Activated naive CD4-positive, alpha-beta T cell treated with anti-CD3 and anti-CD28 coated beads for 36 hours (primary cell): ENCODE measurements at regions of chr4 and their contacts with region 1.

Region 1: GRCh38 chr4:87848622-87849351 is 16.0 kb downstream of the MEPE start:
- DNase-seq: peak; percentile 65
- H3K4me3 Mint-ChIP-seq: peak overlapping the region; percentile 28
- H3K27ac Mint-ChIP-seq: no peak overlapping the region
- H3K4me1 Mint-ChIP-seq: peaks cover 5% of the 10 kb centered on the region
- H3K27me3 Mint-ChIP-seq: peaks cover 22% of the 10 kb centered on the region

Region 2: GRCh38 chr4:87150498-87151261 is 698.1 kb before region 1 on chr4:
- CTCF ChIA-PET with region 1: interaction called, 3 read pairs
- intact Hi-C with region 1: loop called (anchors 2 kb)
- DNase-seq: peak; percentile 67
- H3K4me3 Mint-ChIP-seq: no peak overlapping the region
- H3K27ac Mint-ChIP-seq: no peak overlapping the region
- H3K4me1 Mint-ChIP-seq: no peaks in the 10 kb centered on the region
- H3K27me3 Mint-ChIP-seq: no peaks in the 10 kb centered on the region

Region 3: DNA sequence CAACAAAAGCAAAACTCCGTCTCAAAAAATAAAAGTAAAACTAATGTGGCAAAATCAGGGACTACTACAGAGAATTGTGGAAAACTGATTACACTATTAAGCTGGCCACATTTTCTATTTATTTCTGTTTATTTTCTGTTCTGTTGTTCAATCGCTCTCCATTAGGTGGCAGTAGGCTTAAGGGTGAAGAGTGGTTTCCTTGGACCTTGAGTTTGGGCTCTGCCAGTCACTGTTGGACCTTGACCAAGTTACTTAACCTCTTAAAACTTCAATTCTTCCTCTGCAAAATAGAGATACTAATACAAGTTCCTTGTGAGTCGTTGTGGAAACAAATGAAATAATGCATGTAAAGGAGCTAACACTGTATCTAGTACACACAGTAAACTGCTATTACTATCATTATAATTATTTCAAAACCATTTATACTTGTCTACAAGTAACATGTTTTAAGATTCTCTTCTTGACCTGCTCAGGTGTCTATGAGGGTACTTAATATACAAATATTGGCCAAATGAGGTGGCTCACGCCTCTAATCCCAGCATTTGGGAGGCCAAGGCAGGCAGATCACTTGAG is 473.0 kb before region 1 on chr4:
- CTCF ChIA-PET with region 1: interaction called, 5 read pairs
- intact Hi-C with region 1: loop called (anchors 10 kb)
- DNase-seq: no peak
- H3K4me3 Mint-ChIP-seq: no peak overlapping the region
- H3K27ac Mint-ChIP-seq: no peak overlapping the region
- H3K4me1 Mint-ChIP-seq: no peaks in the 10 kb centered on the region
- H3K27me3 Mint-ChIP-seq: no peaks in the 10 kb centered on the region

Region 4: DNA sequence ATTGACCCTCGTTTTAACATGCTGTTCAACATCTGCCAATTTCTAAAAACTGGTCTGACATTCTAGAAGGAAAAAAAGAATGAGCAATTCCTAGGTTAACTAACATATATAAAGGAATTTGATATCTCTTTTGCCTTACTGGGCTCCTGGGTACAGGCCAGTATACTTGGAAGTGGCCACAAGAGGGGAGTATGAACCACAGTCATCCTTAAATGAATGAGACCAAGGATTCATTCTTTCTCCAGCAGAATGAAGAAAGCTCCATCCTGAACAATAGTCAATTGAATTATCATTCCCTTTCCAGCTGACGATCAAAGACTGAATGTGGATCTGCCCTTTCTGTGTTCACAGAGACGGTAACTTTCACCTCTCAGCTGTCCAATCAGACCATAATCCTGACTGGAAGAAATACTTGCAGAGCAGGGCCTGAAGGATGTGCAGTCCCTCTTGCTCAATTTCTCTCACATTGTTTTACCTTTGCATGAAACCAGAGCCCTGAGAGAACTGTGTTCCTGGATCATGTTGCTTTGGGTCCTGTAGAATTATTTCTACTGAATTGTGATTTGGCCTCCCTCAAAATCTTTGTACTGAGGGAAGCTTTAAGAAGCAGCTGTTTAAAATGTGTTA is 304.8 kb before region 1 on chr4:
- CTCF ChIA-PET with region 1: no interaction called
- intact Hi-C with region 1: loop called (anchors 2 kb)
- DNase-seq: peak; percentile 5
- H3K4me3 Mint-ChIP-seq: no peak overlapping the region
- H3K27ac Mint-ChIP-seq: no peak overlapping the region
- H3K4me1 Mint-ChIP-seq: no peaks in the 10 kb centered on the region
- H3K27me3 Mint-ChIP-seq: peaks cover 7% of the 10 kb centered on the region

Region 5: DNA sequence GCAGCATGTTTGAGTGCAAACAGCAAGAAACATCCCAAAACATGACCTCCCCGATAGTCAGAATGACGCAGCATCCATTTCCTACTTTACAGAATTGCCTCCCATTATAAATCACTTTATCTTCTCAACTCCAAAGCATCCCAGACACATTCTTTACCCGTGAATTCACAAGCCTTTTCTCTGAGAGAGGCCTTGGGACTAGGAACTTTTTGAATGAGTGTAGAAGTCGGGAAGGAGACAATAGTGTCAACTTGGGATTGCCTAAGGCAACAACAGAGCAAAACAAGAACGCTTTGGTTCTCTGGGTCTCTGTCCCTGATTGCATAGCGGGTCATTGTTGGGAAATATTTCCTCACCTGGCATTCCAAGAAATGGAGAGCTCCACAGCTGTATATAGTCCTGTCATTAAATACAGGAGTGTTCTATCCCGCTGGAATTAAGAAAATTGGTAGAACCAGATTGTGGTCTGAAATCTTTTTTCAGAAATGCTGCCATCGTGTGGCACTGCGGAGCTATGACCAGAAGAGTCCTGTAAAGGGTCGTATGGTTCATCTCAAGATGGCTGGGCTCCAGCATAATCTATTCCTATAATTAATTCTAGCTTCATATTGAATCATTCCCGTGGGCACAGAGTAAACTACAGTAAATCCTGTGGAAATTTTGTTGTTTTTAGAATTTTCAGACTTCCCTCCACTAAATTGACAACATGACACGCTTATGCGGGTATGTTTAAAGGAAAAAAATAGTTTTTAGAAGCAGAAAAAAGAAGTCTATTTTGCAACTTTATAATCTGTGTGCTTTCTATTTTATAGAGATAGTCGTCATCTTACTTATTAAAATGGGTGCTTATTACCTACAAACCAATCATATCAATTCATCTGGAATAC is 124.7 kb after region 1 on chr4:
- CTCF ChIA-PET with region 1: interaction called, 25 read pairs
- intact Hi-C with region 1: loop called (anchors 1 kb)
- DNase-seq: peak; percentile 58
- H3K4me3 Mint-ChIP-seq: no peak overlapping the region
- H3K27ac Mint-ChIP-seq: no peak overlapping the region
- H3K4me1 Mint-ChIP-seq: peaks cover 5% of the 10 kb centered on the region
- H3K27me3 Mint-ChIP-seq: peaks cover 33% of the 10 kb centered on the region

Region 6: DNA sequence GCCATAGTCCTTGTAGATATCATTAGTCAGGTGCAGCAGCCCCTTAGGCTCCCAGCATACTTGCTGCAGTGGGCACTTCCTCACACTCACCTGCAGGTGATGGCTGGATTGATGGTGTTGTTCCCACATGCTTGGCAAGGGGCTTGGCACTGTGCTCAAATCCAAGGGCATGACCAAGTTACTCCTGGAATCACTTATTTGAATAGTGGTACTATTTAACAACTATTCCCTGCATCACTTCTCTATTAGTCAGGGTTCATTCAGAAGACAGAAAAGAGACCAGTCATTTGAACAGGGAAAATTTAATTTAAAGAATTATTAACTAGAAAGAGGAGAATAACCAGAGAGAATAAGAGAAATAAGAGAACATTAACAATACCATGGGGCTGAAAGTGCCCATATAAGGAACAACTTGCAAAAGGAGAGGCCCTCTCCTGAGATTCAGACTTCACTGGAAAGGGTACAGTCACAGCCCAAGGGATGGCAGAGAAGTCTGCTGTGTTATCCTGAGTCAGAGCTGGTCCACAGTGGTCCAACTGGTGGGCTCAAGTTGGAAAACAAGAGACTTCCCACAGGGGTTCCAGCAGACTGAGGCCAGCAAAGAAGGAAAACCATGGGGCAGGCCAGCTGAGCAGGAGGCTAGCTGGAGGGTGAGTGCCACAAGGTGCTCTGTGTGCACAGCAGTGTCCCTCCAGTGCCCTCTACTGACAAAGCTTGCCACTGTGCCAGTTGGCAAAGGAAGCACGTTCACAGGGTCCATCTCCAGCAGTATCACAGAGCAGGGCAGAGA is 136.5 kb after region 1 on chr4:
- CTCF ChIA-PET with region 1: interaction called, 5 read pairs
- intact Hi-C with region 1: loop called (anchors 1 kb)
- DNase-seq: peak; percentile 63
- H3K4me3 Mint-ChIP-seq: no peak overlapping the region
- H3K27ac Mint-ChIP-seq: no peak overlapping the region
- H3K4me1 Mint-ChIP-seq: no peaks in the 10 kb centered on the region
- H3K27me3 Mint-ChIP-seq: peaks cover 9% of the 10 kb centered on the region

Region 7: GRCh38 chr4:88138566-88138965 is 289.8 kb after region 1 on chr4:
- CTCF ChIA-PET with region 1: no interaction called
- intact Hi-C with region 1: no loop called
- DNase-seq: no peak
- H3K4me3 Mint-ChIP-seq: no peak overlapping the region
- H3K27ac Mint-ChIP-seq: no peak overlapping the region
- H3K4me1 Mint-ChIP-seq: no peaks in the 10 kb centered on the region
- H3K27me3 Mint-ChIP-seq: no peaks in the 10 kb centered on the region

Region 8: GRCh38 chr4:88320780-88321373 is 472.1 kb after region 1 on chr4:
- CTCF ChIA-PET with region 1: no interaction called
- intact Hi-C with region 1: no loop called
- DNase-seq: peak; percentile 28
- H3K4me3 Mint-ChIP-seq: peak overlapping the region; percentile 49
- H3K27ac Mint-ChIP-seq: peak overlapping the region; percentile 59
- H3K4me1 Mint-ChIP-seq: peaks cover 15% of the 10 kb centered on the region
- H3K27me3 Mint-ChIP-seq: no peaks in the 10 kb centered on the region

Region 9: GRCh38 chr4:88514557-88515511 is 666.0 kb after region 1 on chr4:
- CTCF ChIA-PET with region 1: no interaction called
- intact Hi-C with region 1: loop called (anchors 2 kb)
- DNase-seq: no peak
- H3K4me3 Mint-ChIP-seq: no peak overlapping the region
- H3K27ac Mint-ChIP-seq: no peak overlapping the region
- H3K4me1 Mint-ChIP-seq: no peaks in the 10 kb centered on the region
- H3K27me3 Mint-ChIP-seq: no peaks in the 10 kb centered on the region